ENCODE measurements at regions of chr2 and their contacts with region 1.

Region 1: DNA sequence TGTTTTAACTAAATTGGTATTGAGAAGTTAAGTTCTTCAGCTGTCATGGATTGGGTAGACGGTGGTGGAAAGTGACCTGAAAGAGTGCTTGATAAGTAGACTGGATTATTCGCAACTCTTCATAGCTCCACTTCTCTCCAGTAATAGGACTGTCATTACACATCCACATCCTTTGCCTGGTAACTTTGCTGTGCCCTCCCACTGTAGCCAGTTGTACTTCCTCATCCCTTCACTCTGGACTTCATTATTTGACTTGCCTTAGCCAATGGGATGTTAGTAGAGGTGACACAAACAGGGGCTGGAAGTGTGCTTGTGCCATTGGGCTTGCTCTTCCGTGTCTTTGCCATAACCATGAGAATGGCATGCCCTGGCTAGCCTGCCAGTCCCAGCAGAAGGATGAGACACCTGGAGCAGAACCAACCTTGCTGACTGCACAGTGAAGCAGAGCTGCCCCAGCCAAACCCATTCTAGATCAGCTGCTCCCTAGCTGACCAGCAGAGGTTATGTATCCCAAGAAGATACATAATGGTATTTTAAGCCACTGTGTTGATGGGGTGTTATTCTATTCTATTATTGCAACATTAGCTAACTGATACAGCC is 16.9 kb downstream of the QPCT start:
- DNase-seq: no peak
- CTCF ChIP-seq: no peak

Region 2: GRCh38 chr2:37350034-37350433 is 11.3 kb before region 1 on chr2:
- CTCF ChIA-PET with region 1: interaction called, 22 read pairs
- POLR2A ChIA-PET with region 1: no interaction called
- DNase-seq: peak; percentile 25
- CTCF ChIP-seq: no peak

Region 3: DNA sequence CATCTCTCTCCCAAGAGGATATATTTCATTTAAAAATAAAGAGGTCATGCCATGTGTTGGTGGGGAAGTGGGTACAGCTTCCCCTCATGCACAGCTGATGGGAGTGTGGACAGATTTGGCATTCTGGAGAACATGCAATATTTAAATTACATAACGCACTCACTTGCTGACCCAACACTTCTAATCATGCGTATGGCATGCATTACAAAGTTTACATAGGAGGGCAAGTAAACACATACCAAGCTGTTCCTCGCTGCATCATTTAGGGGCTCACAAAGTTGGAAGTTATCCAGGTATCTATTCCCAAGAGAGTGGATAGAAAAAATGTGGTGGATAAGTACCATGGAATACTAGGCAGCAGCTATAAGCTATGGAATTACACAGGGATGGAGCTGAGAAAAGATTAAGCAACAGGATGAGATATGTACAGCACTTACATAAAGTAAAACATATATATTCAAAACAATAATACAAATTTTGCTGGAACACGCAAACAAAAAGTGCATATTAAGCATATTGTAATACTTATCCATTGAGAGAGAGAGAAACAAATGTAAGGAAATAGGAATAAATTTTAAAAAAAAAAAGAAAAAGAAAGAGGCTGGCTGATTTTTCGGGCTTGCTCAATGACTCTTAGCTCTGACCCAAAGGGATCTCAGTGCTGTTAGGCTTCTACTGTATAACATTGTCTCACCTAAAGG is 703.6 kb after region 1 on chr2:
- CTCF ChIA-PET with region 1: no interaction called
- POLR2A ChIA-PET with region 1: no interaction called
- DNase-seq: no peak
- CTCF ChIP-seq: no peak